HepG2 (cell line): ENCODE measurements at regions of chr2 and their contacts with region 1.

Region 1: DNA sequence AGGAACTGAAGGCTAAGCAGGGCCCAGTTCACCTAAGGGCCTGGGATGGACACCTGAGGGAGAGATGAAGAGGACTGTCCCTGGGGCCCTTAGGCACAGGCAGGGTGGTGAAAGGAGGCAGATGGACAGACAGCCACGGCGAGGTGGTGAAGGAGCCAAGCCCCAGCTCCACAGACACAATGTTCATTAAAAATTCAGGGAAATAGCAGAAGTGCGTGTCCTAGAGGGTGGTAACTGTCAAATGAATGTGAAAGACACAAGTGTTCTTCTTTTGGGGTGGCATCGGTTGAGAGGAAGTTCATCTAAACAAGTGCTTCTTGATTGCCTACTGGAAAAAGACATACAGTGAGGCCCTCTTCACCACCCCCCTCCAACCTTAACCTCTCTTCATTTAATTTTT is 76.2 kb upstream of the SIX2 start:
- DNase-seq: no peak
- ATAC-seq: no peak
- H3K4me3 ChIP-seq: no peak overlapping the region
- H3K27ac ChIP-seq: no peak overlapping the region
- H3K4me1 ChIP-seq: no peaks in the 10 kb centered on the region
- H3K27me3 ChIP-seq: 0 out of 5 replicates have a peak, but pooled peaks cover 0 to 7% of the 10 kb centered on the region in 2 experiments
- CTCF ChIP-seq: no peak
- EP300 ChIP-seq: no peak
- POLR2A ChIP-seq: no peak
- RAD21 ChIP-seq: no peak

Region 2: DNA sequence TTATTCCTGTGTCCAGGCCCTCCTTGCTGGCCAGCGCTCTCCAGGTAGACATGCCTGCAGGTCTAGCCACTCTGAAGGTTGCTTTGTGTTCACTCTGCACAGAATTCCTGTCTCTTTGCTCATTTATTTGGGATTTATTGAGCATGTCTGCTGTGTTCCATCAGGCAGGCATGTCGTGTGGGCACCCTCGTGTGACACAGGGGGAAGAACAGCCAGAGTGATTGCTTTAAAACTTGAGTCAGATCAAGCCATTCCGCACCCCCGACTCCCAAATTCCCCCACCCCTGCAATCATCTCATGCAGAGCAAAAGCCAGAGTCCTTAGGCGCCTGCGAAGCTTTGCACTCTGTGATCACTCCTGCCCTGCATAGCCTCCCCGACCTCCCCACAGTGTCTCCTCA is 31.5 kb before region 1 on chr2:
- CTCF ChIA-PET with region 1: no interaction called
- POLR2A ChIA-PET with region 1: no interaction called
- in situ Hi-C with region 1: loop called (anchors 5 kb)
- intact Hi-C with region 1: no loop called
- DNase-seq: no peak
- ATAC-seq: no peak
- H3K4me3 ChIP-seq: no peak overlapping the region
- H3K27ac ChIP-seq: no peak overlapping the region
- H3K4me1 ChIP-seq: peaks cover 11% of the 10 kb centered on the region; the same call in 1 of the 2 replicates
- H3K27me3 ChIP-seq: peaks cover 0 to 15% of the 10 kb centered on the region in 2 experiments; a peak in 2 of 5 replicates
- CTCF ChIP-seq: no peak
- EP300 ChIP-seq: no peak
- POLR2A ChIP-seq: no peak
- RAD21 ChIP-seq: no peak